Head of caudate nucleus (tissue), 42 donors: ENCODE measurements at regions of chr14 and their contacts with region 1.

Region 1: DNA sequence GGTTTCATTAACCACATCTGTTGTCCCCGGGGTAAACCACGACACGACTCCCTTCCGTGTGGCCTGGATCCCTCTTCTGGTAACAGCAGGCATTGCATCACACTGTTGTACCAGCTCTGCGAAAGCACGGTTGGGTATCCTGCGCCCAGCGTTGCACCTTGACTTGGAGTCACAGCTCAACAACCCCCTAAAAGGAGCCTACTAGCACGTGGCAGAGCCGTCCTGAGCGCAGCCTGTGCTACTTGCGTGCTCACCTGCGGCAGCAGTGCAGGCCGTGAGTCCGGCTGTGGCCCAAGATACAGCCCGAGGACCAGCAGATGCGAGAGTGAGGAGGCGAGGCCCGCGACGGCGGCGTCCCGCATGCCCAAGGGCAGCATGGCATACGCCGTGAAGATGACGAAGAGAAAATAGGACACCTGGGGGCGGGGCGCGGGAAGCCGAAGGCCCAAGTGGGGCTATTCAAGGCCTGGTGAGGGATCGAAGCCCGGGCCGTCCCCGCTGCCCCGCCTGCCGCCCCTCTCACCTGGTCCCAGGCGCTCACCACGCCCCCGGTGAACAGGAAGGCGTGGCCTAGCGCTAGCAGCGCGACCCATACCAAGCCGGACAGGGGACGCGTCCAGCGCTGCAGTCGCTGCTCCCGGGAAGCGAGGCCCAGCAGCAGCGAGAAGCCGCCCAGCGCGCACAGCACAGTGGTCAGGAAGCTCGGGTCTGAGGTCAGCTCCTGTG is 2.4 kb downstream of the ADCY4 start:
- DNase-seq: peak; percentile 48 to 87 (median 72)

Region 2: DNA sequence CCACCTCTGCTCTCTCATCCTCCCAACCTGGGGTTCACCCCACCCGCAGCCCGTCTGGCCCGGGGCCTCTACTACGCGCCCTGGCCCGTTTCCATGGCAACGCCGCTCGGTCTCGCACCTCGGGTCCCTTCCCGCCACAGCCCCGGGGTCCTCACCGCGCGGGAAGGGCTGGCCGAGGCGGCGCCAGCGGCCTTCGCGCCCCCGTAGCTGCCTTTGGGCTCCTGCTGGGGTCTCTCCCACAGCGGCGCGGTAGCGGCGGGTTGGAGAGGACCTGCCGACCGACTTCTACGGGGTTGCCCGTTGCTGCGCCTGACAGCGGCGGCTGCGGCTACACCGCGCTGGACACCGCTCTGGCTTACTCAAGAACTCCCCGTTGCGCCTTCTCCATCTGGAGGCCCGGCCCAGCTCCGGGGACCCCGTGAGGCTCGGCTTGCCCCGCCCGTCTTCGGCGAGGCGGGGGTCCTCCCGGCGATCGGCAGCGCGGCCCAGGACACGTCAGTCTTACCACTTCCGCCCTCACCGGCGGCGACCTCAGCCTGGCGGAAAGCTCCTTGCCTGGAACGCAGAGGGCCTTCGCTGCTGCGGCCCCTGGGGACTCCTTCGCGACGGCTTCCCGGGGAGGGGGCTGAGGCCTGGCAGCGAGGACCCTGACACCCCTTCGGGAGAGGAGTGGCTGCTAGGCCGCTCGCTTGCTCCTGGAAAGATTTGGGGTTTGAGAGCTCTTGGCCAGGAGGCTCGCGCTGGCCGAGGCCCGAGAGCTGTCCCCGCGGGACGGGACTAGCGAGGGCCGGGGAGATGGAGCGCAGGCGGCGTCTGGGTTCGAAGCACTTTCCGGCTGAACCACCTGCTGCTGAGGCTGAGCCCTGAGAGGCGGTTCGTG is 137.0 kb before region 1 on chr14 and contains the start of gene TM9SF1:
- intact Hi-C with region 1: no loop called
- DNase-seq: peak; percentile 67 to 93 (median 86)

Region 3: GRCh38 chr14:24351517-24351916 is 19.1 kb after region 1 on chr14:
- intact Hi-C with region 1: no loop called
- DNase-seq: no peak

Region 4: DNA sequence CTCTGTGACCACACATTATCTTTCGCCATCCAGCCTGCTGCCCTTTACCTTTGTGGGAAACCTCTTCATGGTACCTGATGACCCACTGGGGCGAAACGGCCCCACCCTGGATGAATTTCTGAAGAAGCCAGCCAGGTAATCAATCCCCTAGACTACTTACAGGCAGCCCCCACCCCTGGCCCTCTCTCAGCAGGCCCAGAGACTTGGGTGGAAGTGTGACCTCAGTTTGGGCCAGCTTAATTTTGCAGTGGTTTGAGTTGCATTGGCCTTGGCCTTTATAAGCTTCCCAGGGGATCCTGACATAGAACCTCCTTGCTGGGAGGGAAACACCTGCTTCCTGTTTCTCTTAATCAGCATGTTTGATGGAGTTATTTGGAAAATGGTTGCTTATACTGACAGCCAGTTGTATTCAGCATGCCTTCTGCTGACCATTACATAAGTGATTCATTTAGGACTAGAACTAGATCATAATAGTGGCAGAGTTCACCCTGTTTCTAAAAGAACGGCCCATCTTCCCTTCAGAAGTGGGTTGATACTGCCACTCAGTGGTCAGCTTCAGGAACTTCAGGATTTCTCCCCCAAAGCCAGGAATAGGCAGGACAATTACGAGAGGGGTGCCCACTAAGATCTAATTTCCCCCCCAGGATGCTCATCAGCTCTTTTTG is 104.1 kb after region 1 on chr14:
- intact Hi-C with region 1: loop called (anchors 5 kb)
- DNase-seq: peak in 27 of 42 donors; percentile 28 to 79 (median 59)